Adrenal gland (tissue), 19 donors: ENCODE measurements at regions of chr3 and their contacts with region 1.

Region 1: GRCh38 chr3:184017672-184018423 is at the start of gene ABCC5:
- DNase-seq: peak; percentile 94 to 97 (median 94)
- H3K4me3 ChIP-seq: peak within 1 kb of the TSS; percentile 59 to 100 (median 87)
- H3K27ac ChIP-seq: peak within 1 kb of the TSS; percentile 51 to 93 (median 69)
- H3K4me1 ChIP-seq: peaks cover 14 to 28% of the 10 kb centered on the region in 2 donors
- H3K27me3 ChIP-seq: no peaks in the 10 kb centered on the region
- CTCF ChIP-seq: peak in 3 of 6 experiments; percentile 12 to 58 (median 56)
- POLR2A ChIP-seq: peak in 1 of 2 donors; percentile 61
- total RNA-seq, gene ABCC5: 11.4 to 45.3 (median 24.8) TPM

Region 2: DNA sequence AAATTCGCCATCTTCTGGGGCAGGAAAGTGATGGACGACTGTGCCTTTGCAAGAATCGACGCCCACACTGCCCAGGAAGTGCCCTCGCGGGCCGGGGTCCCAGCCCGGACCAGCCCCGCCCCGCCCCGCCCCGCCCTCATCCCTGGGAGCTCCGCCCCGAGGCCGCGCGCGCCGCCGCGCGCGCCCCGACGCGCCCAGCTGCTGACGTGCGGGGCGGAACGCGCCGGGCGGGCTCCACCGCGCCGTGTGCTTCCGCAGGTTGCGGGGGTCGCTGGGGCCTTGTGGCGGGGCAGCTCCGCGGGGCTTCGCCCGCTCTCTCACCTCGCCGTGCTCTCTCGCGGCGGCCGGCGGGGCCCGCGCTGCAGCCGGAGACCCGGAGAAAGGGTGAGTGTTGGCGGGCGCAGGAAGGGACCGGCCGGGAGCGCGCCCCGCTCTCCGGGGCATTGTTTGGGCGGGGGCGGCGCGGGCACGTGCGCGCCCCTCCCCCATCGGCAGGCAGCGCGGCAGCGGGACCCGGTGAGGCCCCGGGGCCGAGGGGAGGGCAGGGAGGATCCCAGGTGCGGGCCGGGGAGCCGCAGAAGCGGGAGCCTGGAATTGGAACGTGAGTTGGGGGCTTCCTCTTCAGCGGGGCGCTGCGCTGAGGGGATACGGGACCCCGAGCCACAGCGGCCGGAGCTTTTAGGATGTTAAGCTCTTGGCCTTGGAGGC is 320.1 kb before region 1 on chr3 and contains the start of gene YEATS2:
- intact Hi-C with region 1: no loop called
- DNase-seq: peak; percentile 43 to 70 (median 54)
- H3K4me3 ChIP-seq: peak within 1 kb of the TSS; percentile 43 to 90 (median 71)
- H3K27ac ChIP-seq: peak within 1 kb of the TSS in 4 of 5 donors; percentile 83 to 95 (median 92)
- H3K4me1 ChIP-seq: peaks cover 0 to 20% of the 10 kb centered on the region in 2 donors
- H3K27me3 ChIP-seq: no peaks in the 10 kb centered on the region
- CTCF ChIP-seq: no peak
- POLR2A ChIP-seq: peak in 1 of 2 donors; percentile 57
- total RNA-seq, gene YEATS2: 9.5 to 27.1 (median 15.4) TPM

Region 3: GRCh38 chr3:183904833-183905780 is 112.7 kb before region 1 on chr3:
- intact Hi-C with region 1: loop called (anchors 5 kb)
- DNase-seq: peak in 2 of 7 donors; percentile 12 to 21
- H3K4me3 ChIP-seq: no peak overlapping the region
- H3K27ac ChIP-seq: no peak overlapping the region
- H3K4me1 ChIP-seq: no peaks in the 10 kb centered on the region
- H3K27me3 ChIP-seq: no peaks in the 10 kb centered on the region
- CTCF ChIP-seq: no peak
- POLR2A ChIP-seq: no peak

Region 4: DNA sequence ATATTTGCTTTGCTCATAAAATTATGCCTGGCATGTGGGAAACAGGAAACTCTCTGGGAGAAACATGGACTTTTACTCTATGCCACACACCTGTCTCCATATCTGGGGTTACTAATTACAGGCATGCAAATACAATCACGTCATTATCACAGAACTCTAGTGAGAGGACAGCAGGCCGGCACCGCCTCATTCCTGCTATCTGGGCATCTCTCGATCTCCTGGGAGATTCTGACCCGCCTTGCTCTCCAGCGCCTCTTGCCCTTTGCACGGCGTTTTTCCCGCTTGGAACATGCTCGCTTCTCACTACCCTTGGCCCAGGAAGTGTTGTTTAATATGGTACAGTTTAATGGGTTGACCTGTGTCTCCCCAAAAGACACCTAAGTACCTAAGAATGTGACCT is 87.8 kb before region 1 on chr3:
- intact Hi-C with region 1: no loop called
- DNase-seq: no peak
- H3K4me3 ChIP-seq: no peak overlapping the region
- H3K27ac ChIP-seq: no peak overlapping the region
- H3K4me1 ChIP-seq: no peaks in the 10 kb centered on the region
- H3K27me3 ChIP-seq: no peaks in the 10 kb centered on the region
- CTCF ChIP-seq: no peak
- POLR2A ChIP-seq: no peak

Region 5: DNA sequence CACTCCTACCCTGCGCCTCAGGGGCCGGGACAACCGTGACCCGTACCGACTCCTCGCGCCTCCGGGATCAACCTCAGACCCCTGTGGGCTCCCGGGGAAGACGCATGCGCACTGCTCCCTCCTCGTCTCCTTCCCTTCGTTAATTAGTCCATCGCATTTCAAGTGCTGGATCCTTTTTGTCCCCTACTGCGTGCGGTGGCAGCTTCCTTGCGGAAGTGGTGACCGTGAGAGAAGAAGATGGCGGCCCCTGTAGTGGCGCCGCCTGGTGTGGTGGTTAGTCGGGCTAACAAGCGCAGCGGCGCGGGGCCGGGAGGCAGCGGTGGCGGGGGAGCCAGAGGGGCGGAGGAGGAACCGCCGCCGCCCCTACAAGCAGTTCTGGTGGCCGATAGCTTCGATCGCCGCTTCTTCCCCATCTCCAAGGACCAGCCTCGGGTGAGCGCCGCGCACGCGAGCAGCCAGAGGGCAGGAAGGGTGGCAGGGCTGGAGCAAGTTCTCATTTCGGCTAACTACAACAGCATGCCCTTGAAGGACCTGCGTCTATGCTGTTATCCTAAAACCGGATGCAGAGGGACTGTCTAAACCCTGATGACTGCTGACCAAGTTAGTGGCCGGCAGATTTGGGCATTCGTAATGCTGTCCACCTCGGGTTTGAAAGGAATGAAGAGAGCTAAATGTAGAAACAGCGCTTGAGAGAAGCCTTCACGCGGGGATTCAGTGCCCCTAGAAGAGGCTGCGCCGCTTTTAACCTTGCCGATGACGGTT is 117.5 kb after region 1 on chr3 and contains the start of gene EIF2B5:
- intact Hi-C with region 1: loop called in 1 of 2 experiments (anchors 10 kb)
- DNase-seq: peak; percentile 89 to 95 (median 91)
- H3K4me3 ChIP-seq: peak within 1 kb of the TSS; percentile 74 to 96 (median 84)
- H3K27ac ChIP-seq: peak within 1 kb of the TSS; percentile 48 to 91 (median 73)
- H3K4me1 ChIP-seq: peaks cover 7 to 16% of the 10 kb centered on the region in 2 donors
- H3K27me3 ChIP-seq: no peaks in the 10 kb centered on the region
- CTCF ChIP-seq: peak in 2 of 6 experiments; percentile 6 to 38
- POLR2A ChIP-seq: peak; percentile 33 to 74
- total RNA-seq, gene EIF2B5: 19.1 to 50.8 (median 40.2) TPM

Region 6: GRCh38 chr3:184428561-184429175 is 410.8 kb after region 1 on chr3:
- intact Hi-C with region 1: no loop called
- DNase-seq: no peak
- H3K4me3 ChIP-seq: no peak overlapping the region
- H3K27ac ChIP-seq: no peak overlapping the region
- H3K4me1 ChIP-seq: no peaks in the 10 kb centered on the region
- H3K27me3 ChIP-seq: no peaks in the 10 kb centered on the region
- CTCF ChIP-seq: no peak
- POLR2A ChIP-seq: no peak